Endothelial cell of umbilical vein (primary cell): ENCODE measurements at regions of chr1 and their contacts with region 1.

Region 1: DNA sequence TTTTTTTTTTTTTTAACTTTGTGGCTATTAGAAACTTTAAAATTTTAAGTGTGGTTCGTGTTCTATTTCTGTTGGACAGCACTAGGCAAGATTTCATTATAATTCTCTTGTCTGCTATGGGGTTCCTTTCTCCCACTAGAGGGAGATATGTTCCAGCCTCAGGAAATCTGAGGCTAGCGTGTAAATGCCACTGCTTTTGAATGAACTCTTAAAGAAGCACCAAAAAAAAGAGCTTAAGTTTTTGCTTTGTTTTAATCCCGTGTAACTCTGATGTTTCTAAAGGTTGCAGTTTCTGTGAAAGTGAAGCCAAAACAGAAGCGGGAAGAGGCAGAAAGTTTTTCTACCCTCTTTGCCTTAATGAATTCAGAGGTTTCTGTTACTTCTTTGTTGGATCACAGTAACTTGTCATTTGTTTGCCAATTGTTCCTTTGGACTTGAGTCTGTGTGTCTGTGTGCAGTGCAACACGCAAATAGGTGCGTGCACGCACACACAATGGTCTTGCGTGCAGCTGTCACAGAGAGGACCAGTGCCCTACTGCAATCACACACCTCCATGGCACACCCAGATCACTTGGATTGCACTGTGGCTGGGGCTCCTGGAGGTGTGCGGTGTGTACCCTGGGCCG is 32.3 kb downstream of the HHAT start:
- DNase-seq: peak; percentile 49
- H3K4me3 ChIP-seq: no peak overlapping the region
- H3K27ac ChIP-seq: no peak overlapping the region
- H3K4me1 ChIP-seq: no peaks in the 10 kb centered on the region
- H3K27me3 ChIP-seq: no peaks in the 10 kb centered on the region
- CTCF ChIP-seq: peak; percentile 27 to 63
- POLR2A ChIP-seq: no peak

Region 2: GRCh38 chr1:210340841-210341240 is 20.1 kb before region 1 on chr1:
- CTCF ChIA-PET with region 1: interaction called, 10 read pairs
- POLR2A ChIA-PET with region 1: no interaction called
- dilution Hi-C with region 1: no loop called
- intact Hi-C with region 1: loop called (anchors 2 kb)
- DNase-seq: no peak
- H3K4me3 ChIP-seq: no peak overlapping the region
- H3K27ac ChIP-seq: no peak overlapping the region
- H3K4me1 ChIP-seq: no peaks in the 10 kb centered on the region
- H3K27me3 ChIP-seq: no peaks in the 10 kb centered on the region
- CTCF ChIP-seq: no peak
- POLR2A ChIP-seq: no peak

Region 3: DNA sequence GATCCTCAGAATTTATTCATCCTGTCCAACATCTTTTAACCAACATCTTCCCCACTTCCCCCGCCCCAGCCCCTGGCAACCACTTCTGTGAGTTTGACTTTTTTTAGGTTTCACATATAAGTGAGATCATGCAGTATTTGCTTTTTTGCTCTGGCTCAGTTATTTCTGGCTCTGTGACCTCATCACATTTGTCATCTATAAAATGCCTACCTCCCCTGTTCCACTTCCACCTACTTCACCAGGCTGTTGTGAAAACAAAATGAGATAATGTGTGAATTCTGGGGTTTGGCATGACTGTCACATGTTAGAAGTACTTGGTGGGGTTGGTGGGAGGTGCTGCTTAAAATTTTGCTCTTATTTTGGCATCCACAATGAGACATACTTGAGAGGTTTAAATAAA is 13.9 kb before region 1 on chr1:
- CTCF ChIA-PET with region 1: interaction called, 10 read pairs
- POLR2A ChIA-PET with region 1: no interaction called
- dilution Hi-C with region 1: no loop called
- intact Hi-C with region 1: loop called (anchors 2 kb)
- DNase-seq: no peak
- H3K4me3 ChIP-seq: no peak overlapping the region
- H3K27ac ChIP-seq: no peak overlapping the region
- H3K4me1 ChIP-seq: no peaks in the 10 kb centered on the region
- H3K27me3 ChIP-seq: no peaks in the 10 kb centered on the region
- CTCF ChIP-seq: no peak
- POLR2A ChIP-seq: no peak